Activated CD4-positive, alpha-beta memory T cell treated with anti-CD3 and anti-CD28 coated beads, Interleukin-2, amount 10 ng/mL, durations not matched to agents 7 days and 5 days (primary cell): ENCODE measurements at regions of chr9 and their contacts with region 1.

Region 1: DNA sequence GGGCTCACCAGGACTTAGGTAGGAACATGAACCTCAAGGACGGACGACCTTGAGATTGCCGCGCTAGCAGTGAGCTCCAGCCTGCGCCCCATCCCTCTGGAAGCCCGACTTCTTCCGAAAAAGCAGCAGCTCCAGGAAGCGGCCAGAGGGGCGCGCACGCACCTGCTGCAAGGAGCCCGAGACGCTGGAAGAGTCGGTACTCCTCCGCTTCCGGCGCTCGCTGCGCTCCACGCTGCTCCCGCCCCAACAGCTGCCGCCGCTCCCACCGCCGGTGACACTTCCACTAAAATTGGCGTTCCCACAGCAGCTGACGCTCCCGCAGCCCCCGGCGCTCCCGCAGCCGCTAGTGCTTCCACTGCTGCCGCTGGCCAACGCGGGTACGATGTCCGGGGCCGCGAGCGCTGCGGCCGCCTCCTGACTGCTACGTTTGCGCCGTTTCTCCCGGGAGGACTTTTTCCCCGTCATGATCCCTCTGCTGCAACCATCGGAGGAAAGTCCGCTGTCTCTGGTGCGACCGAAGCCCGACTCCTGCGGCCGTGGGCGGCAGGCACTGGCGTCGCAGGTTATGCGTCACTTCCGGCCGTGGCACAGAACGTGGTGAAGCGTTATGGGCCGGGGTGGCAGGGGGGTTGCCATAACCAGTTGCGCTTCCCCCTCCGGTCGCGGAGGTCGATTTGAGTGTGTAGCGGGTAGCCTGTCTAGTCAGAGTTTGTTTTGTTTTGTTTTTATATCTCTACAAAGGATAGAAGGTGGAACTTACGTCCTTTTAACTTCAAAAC is at the start of gene CAAP1:
- DNase-seq: peak; percentile 93
- H3K4me3 Mint-ChIP-seq: peak within 1 kb of the TSS; percentile 88
- H3K27ac Mint-ChIP-seq: peak within 1 kb of the TSS; percentile 99
- H3K4me1 Mint-ChIP-seq: peaks cover 38% of the 10 kb centered on the region
- H3K27me3 Mint-ChIP-seq: no peaks in the 10 kb centered on the region
- total RNA-seq, gene CAAP1: 16.6 to 18.1 TPM

Region 2: GRCh38 chr9:26597542-26598149 is 294.8 kb before region 1 on chr9:
- CTCF ChIA-PET with region 1: no interaction called
- POLR2A ChIA-PET with region 1: no interaction called
- DNase-seq: no peak
- H3K4me3 Mint-ChIP-seq: no peak overlapping the region
- H3K27ac Mint-ChIP-seq: no peak overlapping the region
- H3K4me1 Mint-ChIP-seq: no peaks in the 10 kb centered on the region
- H3K27me3 Mint-ChIP-seq: no peaks in the 10 kb centered on the region

Region 3: DNA sequence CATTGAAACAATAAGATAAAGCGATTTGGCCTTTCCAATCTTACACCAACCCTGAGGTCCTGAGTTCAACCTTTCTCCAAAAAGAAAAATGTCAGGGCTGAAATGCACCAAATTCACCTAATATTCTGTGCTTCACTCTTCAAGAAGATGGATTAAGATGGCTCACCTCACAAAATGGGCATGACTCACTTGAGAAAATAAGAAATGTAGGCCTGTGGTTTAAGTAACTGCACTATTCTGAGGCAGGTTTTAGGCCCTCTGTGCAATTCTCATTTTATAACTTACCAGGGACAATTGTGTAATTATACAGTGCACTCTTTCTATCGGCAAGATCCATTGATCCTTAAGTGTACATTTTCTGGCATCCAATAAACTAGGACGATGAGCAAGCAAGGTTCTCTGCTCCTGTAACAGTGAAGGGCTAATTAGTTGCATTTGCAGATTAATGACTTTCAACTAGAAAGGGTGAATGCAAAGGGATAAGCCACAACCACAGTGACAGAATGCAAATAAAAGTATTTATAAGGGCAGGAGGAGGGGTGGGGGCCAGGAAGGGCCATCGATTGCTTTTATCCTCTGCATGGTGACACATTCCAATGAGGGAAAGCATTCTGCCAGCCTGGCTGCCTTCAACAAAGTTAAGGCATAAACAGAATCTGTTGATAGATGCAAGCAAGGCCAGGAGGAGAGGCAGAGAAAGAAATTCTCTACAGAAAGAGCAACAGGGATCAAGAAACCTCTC is 214.3 kb before region 1 on chr9:
- CTCF ChIA-PET with region 1: no interaction called
- POLR2A ChIA-PET with region 1: no interaction called
- DNase-seq: no peak
- H3K4me3 Mint-ChIP-seq: no peak overlapping the region
- H3K27ac Mint-ChIP-seq: no peak overlapping the region
- H3K4me1 Mint-ChIP-seq: no peaks in the 10 kb centered on the region
- H3K27me3 Mint-ChIP-seq: no peaks in the 10 kb centered on the region

Region 4: GRCh38 chr9:26946753-26947727 is 54.6 kb after region 1 on chr9 and contains the start of gene PLAA:
- CTCF ChIA-PET with region 1: interaction called, 3 read pairs
- POLR2A ChIA-PET with region 1: interaction called, 23 read pairs
- DNase-seq: peak; percentile 88
- H3K4me3 Mint-ChIP-seq: peak within 1 kb of the TSS; percentile 85
- H3K27ac Mint-ChIP-seq: peak within 1 kb of the TSS; percentile 92
- H3K4me1 Mint-ChIP-seq: peaks cover 60% of the 10 kb centered on the region
- H3K27me3 Mint-ChIP-seq: no peaks in the 10 kb centered on the region
- total RNA-seq, gene PLAA: 34.1 to 35.9 TPM

Region 5: GRCh38 chr9:26955921-26956859 is 63.8 kb after region 1 on chr9 and contains the start of gene IFT74:
- CTCF ChIA-PET with region 1: interaction called, 6 read pairs
- POLR2A ChIA-PET with region 1: interaction called, 31 read pairs
- DNase-seq: peak; percentile 95
- H3K4me3 Mint-ChIP-seq: peak within 1 kb of the TSS; percentile 85
- H3K27ac Mint-ChIP-seq: peak within 1 kb of the TSS; percentile 90
- H3K4me1 Mint-ChIP-seq: peaks cover 45% of the 10 kb centered on the region
- H3K27me3 Mint-ChIP-seq: no peaks in the 10 kb centered on the region
- total RNA-seq, gene IFT74: 7.4 to 9.4 TPM